PC-3 (cell line): ENCODE measurements at regions of chrX and their contacts with region 1.

Region 1: GRCh38 chrX:10564519-10564918 is 55.9 kb downstream of the MID1 start:
- DNase-seq: no peak
- ATAC-seq: no peak; the same call in none of the 2 replicates
- H3K4me3 ChIP-seq: no peak overlapping the region
- H3K27ac ChIP-seq: no peak overlapping the region
- H3K4me1 ChIP-seq: no peaks in the 10 kb centered on the region
- H3K27me3 ChIP-seq: no peaks in the 10 kb centered on the region
- CTCF ChIP-seq: no peak

Region 2: GRCh38 chrX:10549280-10549679 is 15.2 kb before region 1 on chrX:
- CTCF ChIA-PET with region 1: no interaction called
- POLR2A ChIA-PET with region 1: no interaction called
- intact Hi-C with region 1: loop called (anchors 2 kb)
- DNase-seq: peak; percentile 94
- ATAC-seq: peak; percentile 90
- H3K4me3 ChIP-seq: no peak overlapping the region
- H3K27ac ChIP-seq: peak overlapping the region; percentile 90
- H3K4me1 ChIP-seq: peaks cover 21% of the 10 kb centered on the region
- H3K27me3 ChIP-seq: no peaks in the 10 kb centered on the region
- CTCF ChIP-seq: no peak

Region 3: DNA sequence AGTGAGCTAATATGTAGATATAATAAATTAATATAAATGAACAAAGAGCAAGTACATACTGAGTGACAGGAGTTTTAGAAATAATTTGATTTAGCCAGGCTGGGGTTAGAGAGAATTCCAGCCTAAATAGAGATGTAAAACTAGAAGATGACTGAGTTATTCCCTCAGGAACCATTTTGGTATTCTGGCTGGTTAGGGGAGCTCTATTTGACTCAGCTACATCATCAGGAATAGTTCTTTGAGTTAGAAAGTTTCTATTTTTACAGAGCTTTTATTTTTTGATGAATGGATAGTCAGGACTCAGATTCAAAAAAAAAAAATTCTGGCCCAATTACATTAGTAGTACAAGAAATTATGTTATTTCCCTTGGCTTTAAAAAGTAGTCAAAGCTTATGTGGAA is 236.3 kb after region 1 on chrX:
- CTCF ChIA-PET with region 1: no interaction called
- POLR2A ChIA-PET with region 1: no interaction called
- intact Hi-C with region 1: no loop called
- DNase-seq: no peak
- ATAC-seq: no peak
- H3K4me3 ChIP-seq: no peak overlapping the region
- H3K27ac ChIP-seq: no peak overlapping the region
- H3K4me1 ChIP-seq: peaks cover 5% of the 10 kb centered on the region; the same call in 1 of the 2 replicates
- H3K27me3 ChIP-seq: no peaks in the 10 kb centered on the region
- CTCF ChIP-seq: no peak